ENCODE measurements at regions of chr1 and their contacts with region 1.

Region 1: DNA sequence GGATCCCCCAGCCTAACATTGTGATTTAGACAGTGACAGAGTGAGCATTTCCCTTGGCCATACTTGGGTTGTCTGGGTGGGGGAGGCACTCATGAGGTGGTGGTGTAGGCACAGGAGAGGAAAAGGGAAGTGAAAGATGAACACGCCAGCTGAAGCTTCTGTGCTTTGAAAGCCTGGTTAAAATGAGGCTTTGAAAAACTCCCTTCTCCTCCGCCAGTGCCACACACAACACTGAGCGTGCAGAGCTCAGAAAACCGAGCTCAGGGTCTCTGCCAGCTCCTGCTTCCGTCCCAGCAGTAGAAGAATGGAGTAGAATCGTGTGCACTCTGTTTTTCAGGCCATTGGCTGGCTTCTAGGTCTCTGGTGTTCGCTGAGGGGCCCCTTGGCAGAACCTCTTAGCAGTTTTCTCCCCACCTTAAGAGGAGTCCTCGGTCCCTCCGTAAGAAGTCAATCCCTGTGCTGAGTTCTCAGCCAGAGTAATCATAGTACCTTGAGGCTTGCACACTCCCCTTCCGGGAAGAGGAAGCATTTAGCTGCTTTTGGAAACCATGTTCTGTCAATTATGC is 12.9 kb downstream of the PLEKHM2 start:
- DNase-seq: peak; percentile 79
- H3K4me3 Mint-ChIP-seq: peak overlapping the region; percentile 77
- H3K27ac Mint-ChIP-seq: peak overlapping the region; percentile 95
- H3K4me1 Mint-ChIP-seq: peaks cover 40% of the 10 kb centered on the region
- H3K27me3 Mint-ChIP-seq: no peaks in the 10 kb centered on the region

Region 2: GRCh38 chr1:15578921-15579682 is 117.9 kb before region 1 on chr1:
- CTCF ChIA-PET with region 1: interaction called, 3 read pairs
- intact Hi-C with region 1: loop called (anchors 5 kb)
- DNase-seq: peak; percentile 66
- H3K4me3 Mint-ChIP-seq: peak overlapping the region; percentile 51
- H3K27ac Mint-ChIP-seq: peak overlapping the region; percentile 92
- H3K4me1 Mint-ChIP-seq: peaks cover 55% of the 10 kb centered on the region
- H3K27me3 Mint-ChIP-seq: no peaks in the 10 kb centered on the region

Region 3: GRCh38 chr1:15684468-15685291 is 12.4 kb before region 1 on chr1:
- CTCF ChIA-PET with region 1: interaction called, 3 read pairs
- intact Hi-C with region 1: loop called (anchors 1 kb)
- DNase-seq: peak; percentile 61
- H3K4me3 Mint-ChIP-seq: peak overlapping the region; percentile 85
- H3K27ac Mint-ChIP-seq: peak overlapping the region; percentile 85
- H3K4me1 Mint-ChIP-seq: peaks cover 45% of the 10 kb centered on the region
- H3K27me3 Mint-ChIP-seq: no peaks in the 10 kb centered on the region